Motor neuron (in vitro differentiated cells): ENCODE measurements at regions of chr1 and their contacts with region 1.

Region 1: DNA sequence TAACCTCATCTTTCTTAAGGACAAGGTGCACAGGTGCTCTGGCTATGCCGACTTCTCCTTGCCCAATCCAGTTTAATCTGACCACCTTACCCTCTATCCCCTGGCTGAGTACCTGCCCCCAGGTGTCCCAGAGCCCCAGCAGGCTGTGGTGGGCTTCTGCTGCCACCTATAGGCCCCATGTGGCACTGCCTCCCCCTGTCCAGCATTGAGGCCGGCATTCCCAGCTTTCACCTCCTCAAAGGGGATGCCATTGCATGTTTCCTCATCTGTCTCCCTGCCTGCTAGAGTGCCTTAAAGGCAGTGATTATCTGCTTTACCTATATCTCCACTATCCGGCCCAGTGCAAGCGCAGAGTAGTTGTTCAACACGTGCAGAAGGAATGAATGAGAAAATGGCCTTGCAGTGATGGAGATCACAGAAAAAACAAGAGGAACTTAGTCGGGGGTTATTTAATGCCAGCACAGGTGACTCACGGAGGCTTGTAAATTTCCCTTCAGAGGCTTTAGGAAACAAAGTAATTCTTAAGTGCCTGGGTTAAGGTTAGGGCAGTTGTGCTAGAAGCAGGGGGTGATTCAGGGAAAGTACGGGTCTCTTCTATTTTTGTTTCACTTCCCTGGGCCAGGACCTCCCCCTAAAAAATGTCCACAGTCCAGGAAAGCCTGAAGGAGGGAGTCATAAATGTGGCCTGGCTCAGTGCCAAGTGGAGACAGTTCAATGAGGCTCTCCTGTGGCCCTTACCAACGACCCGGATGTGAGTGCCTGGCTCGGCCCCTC is 131.8 kb upstream of the NGF start:
- ATAC-seq: peak in 6 of 8 experiments; percentile 25 to 68 (median 43)
- H3K4me3 ChIP-seq: no peak overlapping the region
- H3K27ac ChIP-seq: no peak overlapping the region
- H3K4me1 ChIP-seq: no peaks in the 10 kb centered on the region

Region 2: GRCh38 chr1:115314766-115315165 is 155.1 kb before region 1 on chr1:
- in situ Hi-C with region 1: loop called in 1 of 9 experiments (anchors 10 kb)
- ATAC-seq: no peak
- H3K4me3 ChIP-seq: no peak overlapping the region
- H3K27ac ChIP-seq: no peak overlapping the region
- H3K4me1 ChIP-seq: no peaks in the 10 kb centered on the region

Region 3: GRCh38 chr1:116624040-116624439 is 1154.2 kb after region 1 on chr1:
- in situ Hi-C with region 1: no loop called
- ATAC-seq: no peak
- H3K4me3 ChIP-seq: no peak overlapping the region
- H3K27ac ChIP-seq: no peak overlapping the region
- H3K4me1 ChIP-seq: peaks cover 9 to 13% of the 10 kb centered on the region in 2 donors